ENCODE measurements at regions of chr11 and their contacts with region 1.

Region 1: DNA sequence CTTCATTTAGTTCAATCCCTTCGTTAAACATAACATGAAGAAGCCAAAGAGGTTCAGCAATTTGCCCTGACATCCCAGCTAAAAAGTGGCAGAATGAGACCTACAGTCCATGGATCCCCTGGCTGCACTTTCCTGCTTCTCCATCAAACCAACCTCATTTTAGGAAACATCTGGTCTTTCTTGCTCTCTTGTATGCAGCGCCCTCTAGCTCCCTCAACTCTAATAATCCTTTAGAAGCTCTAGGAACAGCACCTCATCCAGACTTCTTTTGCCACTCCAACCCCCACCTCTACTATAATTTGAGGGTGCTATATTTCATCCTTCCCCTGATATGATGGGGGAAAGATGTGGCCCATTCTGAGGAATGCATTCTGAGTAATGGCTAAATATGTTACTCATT is 7.4 kb downstream of the CNTF start:
- DNase-seq: peak; percentile 31 to 61
- ATAC-seq: peak; percentile 61 to 80
- H3K4me3 ChIP-seq: no peak overlapping the region
- H3K27ac ChIP-seq: no peak overlapping the region
- H3K4me1 ChIP-seq: peaks cover 12% of the 10 kb centered on the region; the same call in 2 of the 3 replicates
- CTCF ChIP-seq: peak; percentile 55
- EP300 ChIP-seq: no peak
- POLR2A ChIP-seq: no peak
- RAD21 ChIP-seq: peak; percentile 25 to 38; a peak in 1 of 5 replicates

Region 2: GRCh38 chr11:58254936-58255335 is 374.9 kb before region 1 on chr11:
- CTCF ChIA-PET with region 1: no interaction called
- POLR2A ChIA-PET with region 1: no interaction called
- DNase-seq: no peak
- ATAC-seq: no peak
- H3K4me3 ChIP-seq: no peak overlapping the region
- H3K27ac ChIP-seq: no peak overlapping the region
- H3K4me1 ChIP-seq: no peaks in the 10 kb centered on the region
- CTCF ChIP-seq: no peak
- EP300 ChIP-seq: no peak
- POLR2A ChIP-seq: no peak
- RAD21 ChIP-seq: no peak

Region 3: GRCh38 chr11:58561394-58562098 is 68.3 kb before region 1 on chr11:
- CTCF ChIA-PET with region 1: no interaction called
- POLR2A ChIA-PET with region 1: no interaction called
- DNase-seq: peak in 1 of 2 experiments; percentile 40
- ATAC-seq: peak; percentile 66 to 68
- H3K4me3 ChIP-seq: no peak overlapping the region
- H3K27ac ChIP-seq: peak overlapping the region; percentile 63 to 76
- H3K4me1 ChIP-seq: peaks cover 26% of the 10 kb centered on the region
- CTCF ChIP-seq: no peak
- EP300 ChIP-seq: no peak
- POLR2A ChIP-seq: no peak
- RAD21 ChIP-seq: no peak

Region 4: DNA sequence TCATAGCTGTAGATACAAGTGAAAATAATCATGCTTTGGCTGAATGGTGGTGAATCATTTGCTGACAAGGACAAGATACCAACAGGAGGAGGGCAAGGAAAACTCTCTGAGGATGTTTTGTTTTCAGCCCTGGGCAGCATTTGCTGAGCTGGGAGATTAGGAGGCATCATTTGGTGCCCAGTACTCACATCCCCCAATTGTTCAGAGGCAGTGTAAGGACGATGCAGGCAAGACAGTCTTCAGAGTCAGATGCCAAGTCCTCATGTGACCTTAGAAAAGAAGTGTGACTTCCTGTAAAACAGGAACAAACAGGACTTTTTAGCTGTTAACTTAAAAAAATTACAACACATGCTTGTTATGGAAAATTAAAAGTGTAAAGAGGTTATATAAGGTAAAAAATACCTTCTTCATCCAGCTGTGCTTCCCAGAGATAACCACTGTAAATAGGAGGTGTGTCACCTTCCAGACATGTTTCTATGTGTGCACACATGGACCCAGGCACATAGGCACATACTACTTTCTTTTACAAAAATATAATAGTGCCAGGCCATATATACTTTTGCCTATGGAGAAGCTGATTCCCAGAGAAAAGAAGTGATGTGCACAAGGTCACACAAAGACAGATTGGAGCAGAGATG is 10.6 kb after region 1 on chr11:
- CTCF ChIA-PET with region 1: interaction called, 18 read pairs
- POLR2A ChIA-PET with region 1: no interaction called
- DNase-seq: no peak
- ATAC-seq: no peak
- H3K4me3 ChIP-seq: no peak overlapping the region
- H3K27ac ChIP-seq: no peak overlapping the region
- H3K4me1 ChIP-seq: no peaks in the 10 kb centered on the region
- CTCF ChIP-seq: no peak
- EP300 ChIP-seq: no peak
- POLR2A ChIP-seq: no peak
- RAD21 ChIP-seq: no peak

Region 5: DNA sequence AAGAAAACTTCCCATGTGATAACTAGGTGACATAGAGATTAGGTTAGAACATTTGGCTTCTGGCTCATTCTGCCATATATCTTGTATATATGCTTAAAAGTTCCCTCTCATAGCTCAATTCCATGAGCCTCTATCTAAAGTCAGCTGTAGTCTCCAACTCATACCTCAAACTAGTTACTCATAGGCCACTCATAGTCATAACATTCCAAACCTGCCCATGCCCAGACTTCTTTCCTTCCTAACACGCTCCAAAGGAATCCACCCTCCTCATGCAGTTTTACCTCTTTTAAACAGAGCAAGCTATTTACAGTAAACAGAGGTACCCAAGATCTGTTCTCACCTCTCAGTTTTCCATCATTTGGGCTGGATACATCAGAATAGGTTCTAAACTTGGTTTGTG is 175.2 kb after region 1 on chr11:
- CTCF ChIA-PET with region 1: no interaction called
- POLR2A ChIA-PET with region 1: no interaction called
- DNase-seq: no peak
- ATAC-seq: no peak
- H3K4me3 ChIP-seq: no peak overlapping the region
- H3K27ac ChIP-seq: no peak overlapping the region
- H3K4me1 ChIP-seq: no peaks in the 10 kb centered on the region
- CTCF ChIP-seq: no peak
- EP300 ChIP-seq: no peak
- POLR2A ChIP-seq: no peak
- RAD21 ChIP-seq: no peak

Measured in A549 (cell line).